Panc1 (cell line): ENCODE measurements at regions of chr12 and their contacts with region 1.

Region 1: GRCh38 chr12:47032644-47033043 is 46.8 kb upstream of the PCED1B start:
- DNase-seq: no peak
- ATAC-seq: peak; percentile 87
- H3K4me3 ChIP-seq: no peak overlapping the region
- H3K27ac ChIP-seq: no peak overlapping the region
- H3K4me1 ChIP-seq: no peaks in the 10 kb centered on the region
- H3K27me3 ChIP-seq: no peaks in the 10 kb centered on the region
- CTCF ChIP-seq: peak; percentile 60; the same call in 1 of the 2 replicates

Region 2: GRCh38 chr12:47307680-47308399 is 275.2 kb after region 1 on chr12:
- CTCF ChIA-PET with region 1: interaction called, 4 read pairs
- POLR2A ChIA-PET with region 1: no interaction called
- in situ Hi-C with region 1: no loop called
- intact Hi-C with region 1: loop called (anchors 2 kb)
- DNase-seq: peak; percentile 71
- ATAC-seq: peak; percentile 97
- H3K4me3 ChIP-seq: no peak overlapping the region
- H3K27ac ChIP-seq: peak overlapping the region; percentile 31; the same call in 1 of the 2 replicates
- H3K4me1 ChIP-seq: no peaks in the 10 kb centered on the region
- H3K27me3 ChIP-seq: no peaks in the 10 kb centered on the region
- CTCF ChIP-seq: peak; percentile 75

Region 3: DNA sequence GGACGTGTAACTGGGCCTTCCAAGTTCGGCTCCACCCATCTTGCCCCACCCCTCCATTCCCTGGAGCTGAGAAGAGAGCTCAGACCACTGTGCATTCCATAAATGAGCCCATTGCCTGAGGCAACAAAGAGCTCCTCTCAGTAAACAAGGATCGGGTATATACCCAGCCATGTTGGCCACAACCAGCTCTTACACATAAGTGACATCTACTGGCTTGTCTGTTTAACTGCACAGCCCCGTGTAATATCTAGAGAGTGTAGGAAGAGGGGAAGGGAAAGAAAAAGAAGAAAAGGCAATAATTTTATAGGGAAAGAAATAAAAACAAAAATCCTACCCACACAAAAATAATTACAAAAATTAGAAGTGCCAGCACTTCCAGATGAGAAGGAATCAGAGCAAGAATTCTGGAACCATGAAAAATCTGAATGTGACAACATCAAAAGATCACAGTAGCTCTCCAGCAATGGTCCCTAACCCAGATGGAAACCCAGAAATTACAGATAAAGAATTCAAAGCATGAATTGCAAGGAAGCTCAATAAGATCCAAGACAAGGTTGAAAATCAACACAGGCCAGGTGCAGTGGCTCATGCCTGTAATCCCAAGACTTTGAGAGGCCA is 365.1 kb after region 1 on chr12:
- CTCF ChIA-PET with region 1: interaction called, 3 read pairs
- POLR2A ChIA-PET with region 1: no interaction called
- in situ Hi-C with region 1: no loop called
- intact Hi-C with region 1: loop called (anchors 5 kb)
- DNase-seq: no peak
- ATAC-seq: peak; percentile 89
- H3K4me3 ChIP-seq: no peak overlapping the region
- H3K27ac ChIP-seq: no peak overlapping the region
- H3K4me1 ChIP-seq: no peaks in the 10 kb centered on the region
- H3K27me3 ChIP-seq: no peaks in the 10 kb centered on the region
- CTCF ChIP-seq: peak; percentile 66

Region 4: DNA sequence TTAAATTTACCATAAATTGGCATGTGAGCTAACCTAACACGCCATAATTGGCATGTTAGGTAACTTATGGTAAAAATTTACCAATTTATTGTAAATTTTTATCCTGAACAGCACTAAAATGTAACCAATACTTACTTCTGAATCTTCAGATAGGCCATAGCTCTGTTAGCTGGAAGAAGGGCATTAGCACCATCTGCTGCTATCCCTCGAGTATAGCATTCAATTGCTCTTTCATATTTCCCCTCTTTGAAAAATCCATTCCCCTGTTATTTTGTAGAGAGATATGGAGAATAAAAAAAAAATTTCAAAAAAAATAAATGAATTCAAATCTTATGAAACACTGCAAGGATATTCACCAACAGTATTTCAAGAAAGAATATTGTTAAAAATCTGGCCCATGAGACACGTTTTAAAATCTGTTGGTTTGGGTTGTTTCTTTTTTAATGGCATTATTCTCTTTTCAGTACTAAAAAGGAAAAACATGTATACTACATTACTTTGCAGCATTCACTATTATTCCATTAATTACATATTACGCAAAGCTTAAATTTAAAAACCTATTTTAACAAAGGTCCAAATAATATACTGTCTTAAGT is 654.1 kb after region 1 on chr12:
- CTCF ChIA-PET with region 1: interaction called, 6 read pairs
- POLR2A ChIA-PET with region 1: no interaction called
- in situ Hi-C with region 1: no loop called
- intact Hi-C with region 1: loop called (anchors 10 kb)
- DNase-seq: no peak
- ATAC-seq: no peak; the same call in 1 of the 2 replicates
- H3K4me3 ChIP-seq: no peak overlapping the region
- H3K27ac ChIP-seq: no peak overlapping the region
- H3K4me1 ChIP-seq: no peaks in the 10 kb centered on the region
- H3K27me3 ChIP-seq: no peaks in the 10 kb centered on the region
- CTCF ChIP-seq: peak; percentile 74; the same call in 1 of the 2 replicates